ENCODE measurements at regions of chr1 and their contacts with region 1.

Region 1: GRCh38 chr1:156282479-156283222 is at the start of gene SMG5:
- DNase-seq: peak; percentile 89 to 98 (median 96)
- ATAC-seq: peak; percentile 95
- H3K4me3 ChIP-seq: peak within 1 kb of the TSS; percentile 93
- H3K4me3 Mint-ChIP-seq: peak within 1 kb of the TSS; percentile 85 to 99 (median 94)
- H3K27ac ChIP-seq: peak within 1 kb of the TSS; percentile 89
- H3K27ac Mint-ChIP-seq: peak within 1 kb of the TSS; percentile 89 to 98 (median 95)
- H3K4me1 ChIP-seq: peaks cover 15 to 22% of the 10 kb centered on the region in 2 donors
- H3K4me1 Mint-ChIP-seq: peaks cover 29 to 51% (median 39%) of the 10 kb centered on the region in 7 donors
- H3K27me3 ChIP-seq: no peaks in the 10 kb centered on the region
- H3K27me3 Mint-ChIP-seq: peaks cover 0 to 3% (median 0%) of the 10 kb centered on the region in 5 donors
- total RNA-seq, gene SMG5: 65.7 to 74.0 (median 69.4) TPM

Region 2: GRCh38 chr1:155989242-155990004 is 293.2 kb before region 1 on chr1:
- CTCF ChIA-PET with region 1: no interaction called
- POLR2A ChIA-PET with region 1: no interaction called
- intact Hi-C with region 1: no loop called
- DNase-seq: peak; percentile 69 to 86 (median 79)
- ATAC-seq: peak; percentile 94
- H3K4me3 ChIP-seq: no peak overlapping the region
- H3K4me3 Mint-ChIP-seq: peak overlapping the region in 2 of 10 donors; percentile 21 to 30
- H3K27ac ChIP-seq: no peak overlapping the region
- H3K27ac Mint-ChIP-seq: peak overlapping the region in 4 of 9 donors; percentile 9 to 73 (median 42)
- H3K4me1 ChIP-seq: peaks cover 10% of the 10 kb centered on the region in 2 donors
- H3K4me1 Mint-ChIP-seq: peaks cover 4 to 17% (median 11%) of the 10 kb centered on the region in 7 donors
- H3K27me3 ChIP-seq: no peaks in the 10 kb centered on the region
- H3K27me3 Mint-ChIP-seq: no peaks in the 10 kb centered on the region

Region 3: DNA sequence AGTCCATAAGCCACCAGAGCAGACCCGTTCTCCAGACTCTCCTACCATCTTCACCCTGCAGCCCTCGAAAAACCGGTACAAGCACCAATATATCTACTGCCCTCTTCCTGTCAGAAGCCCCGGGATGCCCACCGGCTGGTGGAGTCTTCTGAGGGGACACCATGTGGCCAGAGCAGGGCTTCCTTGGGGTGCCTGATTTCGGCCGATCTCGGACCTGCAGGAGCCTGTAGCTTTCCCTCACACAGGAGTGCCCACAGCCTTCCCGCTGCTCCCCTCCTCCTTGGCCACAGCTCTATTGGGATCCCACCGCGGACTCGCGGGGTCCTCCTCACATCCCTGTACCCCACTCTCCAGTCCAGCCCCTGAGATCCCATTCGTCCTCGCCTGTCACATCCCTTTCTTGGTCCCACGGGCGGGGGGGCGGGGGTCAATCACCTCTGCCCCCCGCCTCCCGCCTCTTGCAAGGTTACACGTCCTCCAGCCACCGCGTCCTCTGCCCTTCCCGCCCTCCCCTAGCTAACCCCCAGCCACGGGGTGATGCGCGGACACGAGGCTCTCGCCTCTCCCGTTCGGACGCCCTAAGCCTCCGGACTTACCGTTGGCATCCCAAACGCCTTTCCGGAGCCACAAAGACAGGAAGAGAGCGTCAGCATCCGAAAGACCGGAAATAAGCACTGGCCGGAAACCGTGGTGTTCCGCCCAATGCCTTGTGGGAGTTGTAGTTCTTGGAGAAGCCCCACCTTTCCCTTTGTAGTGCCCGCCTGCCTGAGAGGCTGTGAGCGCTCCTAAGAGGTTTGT is 262.2 kb before region 1 on chr1 and contains the start of gene SSR2:
- CTCF ChIA-PET with region 1: no interaction called
- POLR2A ChIA-PET with region 1: no interaction called
- intact Hi-C with region 1: loop called in 1 of 2 experiments (anchors 1 kb)
- DNase-seq: peak; percentile 44 to 91 (median 84)
- ATAC-seq: peak; percentile 99
- H3K4me3 ChIP-seq: peak within 1 kb of the TSS; percentile 87
- H3K4me3 Mint-ChIP-seq: peak within 1 kb of the TSS; percentile 87 to 99 (median 96)
- H3K27ac ChIP-seq: peak within 1 kb of the TSS; percentile 74
- H3K27ac Mint-ChIP-seq: peak within 1 kb of the TSS; percentile 89 to 99 (median 95)
- H3K4me1 ChIP-seq: peaks cover 4 to 9% of the 10 kb centered on the region in 2 donors
- H3K4me1 Mint-ChIP-seq: peaks cover 20 to 47% (median 41%) of the 10 kb centered on the region in 7 donors
- H3K27me3 ChIP-seq: no peaks in the 10 kb centered on the region
- H3K27me3 Mint-ChIP-seq: peaks cover 0 to 12% (median 0%) of the 10 kb centered on the region in 5 donors
- total RNA-seq, gene SSR2: 207 to 278 (median 256) TPM

Region 4: DNA sequence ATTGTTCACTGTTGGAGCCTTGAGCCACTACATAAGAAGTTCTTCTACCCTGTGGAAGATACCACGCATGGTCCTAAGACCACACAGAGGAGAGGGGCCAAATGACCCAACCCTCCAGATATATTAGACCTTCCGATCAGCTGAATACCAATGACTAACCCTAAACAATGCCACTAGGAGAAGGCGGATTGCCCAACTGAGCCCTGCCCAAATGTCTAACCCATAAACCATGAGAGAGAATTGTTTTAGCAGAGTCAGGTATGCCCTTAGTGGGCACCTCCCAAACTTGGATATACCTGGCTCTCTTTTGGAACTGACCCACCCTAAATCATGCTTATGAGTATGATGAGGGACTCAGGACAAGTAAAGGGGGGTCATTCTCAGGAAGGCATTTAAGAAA is 12.3 kb before region 1 on chr1:
- CTCF ChIA-PET with region 1: interaction called, 3 read pairs
- POLR2A ChIA-PET with region 1: interaction called, 26 read pairs
- intact Hi-C with region 1: no loop called
- DNase-seq: no peak
- ATAC-seq: no peak
- H3K4me3 ChIP-seq: no peak overlapping the region
- H3K4me3 Mint-ChIP-seq: no peak overlapping the region
- H3K27ac ChIP-seq: no peak overlapping the region
- H3K27ac Mint-ChIP-seq: no peak overlapping the region
- H3K4me1 ChIP-seq: no peaks in the 10 kb centered on the region
- H3K4me1 Mint-ChIP-seq: peaks cover 0 to 7% (median 0%) of the 10 kb centered on the region in 7 donors
- H3K27me3 ChIP-seq: no peaks in the 10 kb centered on the region
- H3K27me3 Mint-ChIP-seq: no peaks in the 10 kb centered on the region

Region 5: DNA sequence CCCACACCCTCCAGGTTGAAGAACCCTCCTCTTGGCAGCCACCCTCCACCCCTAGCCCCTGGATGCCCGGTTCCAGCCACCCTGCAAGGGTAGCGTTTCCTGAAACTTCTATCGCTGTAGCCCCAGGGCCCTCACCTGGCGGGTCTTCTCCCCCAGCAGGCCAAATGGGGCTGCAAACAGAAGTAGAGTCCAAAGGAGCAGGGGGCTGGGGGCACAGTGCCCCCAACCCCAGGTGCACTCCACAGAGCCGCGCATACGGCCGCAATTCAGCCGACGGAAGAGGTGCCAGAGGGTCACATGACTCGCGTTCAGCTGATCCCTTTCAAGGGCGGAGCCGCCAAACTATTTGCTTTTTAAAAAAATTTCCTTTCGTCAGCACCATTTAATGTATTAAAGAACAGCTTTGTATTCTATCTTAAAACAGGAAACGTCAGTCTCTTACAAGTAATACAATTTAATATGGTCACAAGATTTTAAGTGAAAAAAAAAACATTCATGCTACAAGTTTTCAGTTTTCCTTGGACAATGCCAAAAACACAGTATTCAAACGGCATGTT is 12.8 kb after region 1 on chr1 and contains the start of gene GLMP:
- CTCF ChIA-PET with region 1: interaction called, 3 read pairs
- POLR2A ChIA-PET with region 1: interaction called, 26 read pairs
- intact Hi-C with region 1: loop called (anchors 1 kb)
- DNase-seq: peak in 8 of 9 donors; percentile 53 to 68 (median 61)
- ATAC-seq: peak; percentile 85
- H3K4me3 ChIP-seq: peak within 1 kb of the TSS; percentile 86
- H3K4me3 Mint-ChIP-seq: peak within 1 kb of the TSS; percentile 88 to 96 (median 91)
- H3K27ac ChIP-seq: peak within 1 kb of the TSS; percentile 76
- H3K27ac Mint-ChIP-seq: peak within 1 kb of the TSS; percentile 78 to 95 (median 80)
- H3K4me1 ChIP-seq: peaks cover 9 to 13% of the 10 kb centered on the region in 2 donors
- H3K4me1 Mint-ChIP-seq: peaks cover 7 to 34% (median 24%) of the 10 kb centered on the region in 7 donors
- H3K27me3 ChIP-seq: no peaks in the 10 kb centered on the region
- H3K27me3 Mint-ChIP-seq: no peaks in the 10 kb centered on the region
- total RNA-seq, gene GLMP: 21.0 to 40.4 (median 24.5) TPM

Measured in naive thymus-derived CD4-positive, alpha-beta T cell (primary cell).